CD4-positive, alpha-beta memory T cell (primary cell): ENCODE measurements at regions of chr1 and their contacts with region 1.

Region 1: DNA sequence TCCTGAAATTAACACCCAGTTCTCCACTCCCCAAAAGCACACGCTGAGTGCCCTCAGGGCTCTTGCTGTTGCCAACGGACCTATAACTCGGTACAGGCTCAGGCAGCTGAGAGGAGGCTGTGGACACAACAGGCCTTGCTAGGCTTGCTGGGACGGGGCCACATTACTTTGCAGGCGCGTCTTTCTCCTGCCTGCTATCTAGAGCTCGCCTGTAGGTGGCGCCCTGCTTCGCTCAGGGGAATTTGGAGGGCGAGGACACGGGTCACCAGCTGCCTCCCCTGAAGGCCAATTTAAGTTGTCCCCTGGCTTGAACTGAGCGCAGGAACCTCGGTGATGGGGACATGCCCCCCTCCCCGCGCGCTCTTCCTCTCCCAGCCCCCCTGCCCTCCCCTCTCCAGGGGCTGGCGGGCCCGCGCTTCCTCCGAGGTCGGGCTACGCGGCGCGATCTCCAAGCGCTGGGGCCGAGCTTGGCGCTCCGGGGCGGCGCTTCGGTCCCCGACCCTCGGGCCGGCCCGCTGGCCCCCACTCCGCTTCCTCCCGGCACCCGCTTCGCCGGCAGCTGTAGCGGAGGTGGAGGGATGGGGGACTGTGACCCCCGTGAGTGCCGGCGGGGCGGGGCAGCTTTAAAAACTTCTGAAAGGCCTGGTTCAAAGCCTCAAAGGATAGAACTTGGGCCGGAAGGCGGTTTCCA is 32.4 kb upstream of the NFIA start:
- DNase-seq: peak; percentile 80 to 87 (median 81)
- H3K4me3 ChIP-seq: peak overlapping the region; percentile 36 to 72
- H3K4me3 Mint-ChIP-seq: peak overlapping the region; percentile 81 to 91 (median 83)
- H3K27ac ChIP-seq: peak overlapping the region; percentile 25
- H3K27ac Mint-ChIP-seq: peak overlapping the region in 1 of 7 donors; percentile 55
- H3K4me1 ChIP-seq: peaks cover 37% of the 10 kb centered on the region
- H3K4me1 Mint-ChIP-seq: peaks cover 13 to 35% (median 24%) of the 10 kb centered on the region in 4 donors
- H3K27me3 ChIP-seq: peaks cover 5% of the 10 kb centered on the region
- H3K27me3 Mint-ChIP-seq: peaks cover 21 to 32% of the 10 kb centered on the region in 2 donors

Region 2: GRCh38 chr1:61077676-61078541 is 27.9 kb after region 1 on chr1:
- CTCF ChIA-PET with region 1: interaction called, 84 read pairs
- POLR2A ChIA-PET with region 1: interaction called, 62 read pairs
- intact Hi-C with region 1: loop called (anchors 1 kb)
- DNase-seq: peak; percentile 93 to 97 (median 96)
- H3K4me3 ChIP-seq: peak overlapping the region; percentile 47 to 73
- H3K4me3 Mint-ChIP-seq: peak overlapping the region; percentile 91 to 98 (median 94)
- H3K27ac ChIP-seq: peak overlapping the region; percentile 68
- H3K27ac Mint-ChIP-seq: peak overlapping the region; percentile 91 to 99 (median 98)
- H3K4me1 ChIP-seq: peaks cover 45% of the 10 kb centered on the region
- H3K4me1 Mint-ChIP-seq: peaks cover 30 to 62% (median 40%) of the 10 kb centered on the region in 4 donors
- H3K27me3 ChIP-seq: no peaks in the 10 kb centered on the region
- H3K27me3 Mint-ChIP-seq: peaks cover 0 to 2% of the 10 kb centered on the region in 2 donors

Region 3: GRCh38 chr1:61141288-61142042 is 91.5 kb after region 1 on chr1:
- CTCF ChIA-PET with region 1: interaction called, 12 read pairs
- POLR2A ChIA-PET with region 1: no interaction called
- intact Hi-C with region 1: no loop called
- DNase-seq: no peak
- H3K4me3 ChIP-seq: no peak overlapping the region
- H3K4me3 Mint-ChIP-seq: no peak overlapping the region
- H3K27ac ChIP-seq: no peak overlapping the region
- H3K27ac Mint-ChIP-seq: no peak overlapping the region
- H3K4me1 ChIP-seq: no peaks in the 10 kb centered on the region
- H3K4me1 Mint-ChIP-seq: no peaks in the 10 kb centered on the region
- H3K27me3 ChIP-seq: no peaks in the 10 kb centered on the region
- H3K27me3 Mint-ChIP-seq: no peaks in the 10 kb centered on the region

Region 4: DNA sequence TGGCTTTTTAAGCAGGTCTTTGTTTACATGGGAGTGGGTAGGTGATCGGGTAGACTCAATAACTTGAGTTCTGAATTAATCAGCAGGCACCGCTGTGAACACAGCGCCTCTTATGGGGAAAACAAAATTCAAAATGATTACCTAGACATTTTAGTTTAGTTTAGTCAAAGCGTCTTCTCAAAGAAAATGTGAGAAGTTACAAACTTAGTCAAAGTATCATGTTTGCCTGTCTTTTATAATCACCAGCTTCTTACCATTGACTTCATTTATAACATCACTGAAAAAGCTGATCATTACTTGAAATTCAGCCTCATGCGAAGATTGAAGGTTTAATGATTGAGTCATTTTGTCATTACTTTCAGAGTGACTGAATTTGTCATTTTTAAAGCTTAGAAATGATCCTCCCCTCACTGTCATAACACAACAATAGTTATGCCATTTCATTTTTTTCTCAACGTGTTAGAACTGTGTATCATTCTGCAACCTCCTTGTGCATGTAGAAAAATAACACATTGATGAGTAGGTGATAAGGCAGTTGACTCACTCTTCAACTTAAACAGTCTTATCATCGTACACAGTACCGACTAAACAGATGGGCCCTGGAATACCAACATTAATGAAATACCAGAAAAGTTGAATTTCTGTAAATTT is 220.9 kb after region 1 on chr1:
- CTCF ChIA-PET with region 1: interaction called, 31 read pairs
- POLR2A ChIA-PET with region 1: no interaction called
- intact Hi-C with region 1: loop called (anchors 1 kb)
- DNase-seq: peak in 1 of 5 donors; percentile 16
- H3K4me3 ChIP-seq: no peak overlapping the region
- H3K4me3 Mint-ChIP-seq: peak overlapping the region in 1 of 8 donors; percentile 62
- H3K27ac ChIP-seq: no peak overlapping the region
- H3K27ac Mint-ChIP-seq: no peak overlapping the region
- H3K4me1 ChIP-seq: peaks cover 7% of the 10 kb centered on the region
- H3K4me1 Mint-ChIP-seq: peaks cover 6 to 16% (median 11%) of the 10 kb centered on the region in 4 donors
- H3K27me3 ChIP-seq: no peaks in the 10 kb centered on the region
- H3K27me3 Mint-ChIP-seq: no peaks in the 10 kb centered on the region

Region 5: GRCh38 chr1:61588736-61589672 is 539.0 kb after region 1 on chr1:
- CTCF ChIA-PET with region 1: interaction called, 15 read pairs
- POLR2A ChIA-PET with region 1: no interaction called
- intact Hi-C with region 1: no loop called
- DNase-seq: peak in 4 of 5 donors; percentile 25 to 40 (median 38)
- H3K4me3 ChIP-seq: no peak overlapping the region
- H3K4me3 Mint-ChIP-seq: no peak overlapping the region
- H3K27ac ChIP-seq: no peak overlapping the region
- H3K27ac Mint-ChIP-seq: no peak overlapping the region
- H3K4me1 ChIP-seq: no peaks in the 10 kb centered on the region
- H3K4me1 Mint-ChIP-seq: no peaks in the 10 kb centered on the region
- H3K27me3 ChIP-seq: no peaks in the 10 kb centered on the region
- H3K27me3 Mint-ChIP-seq: peaks cover 11 to 24% of the 10 kb centered on the region in 2 donors